ENCODE measurements at regions of chr1 and their contacts with region 1.

Region 1: DNA sequence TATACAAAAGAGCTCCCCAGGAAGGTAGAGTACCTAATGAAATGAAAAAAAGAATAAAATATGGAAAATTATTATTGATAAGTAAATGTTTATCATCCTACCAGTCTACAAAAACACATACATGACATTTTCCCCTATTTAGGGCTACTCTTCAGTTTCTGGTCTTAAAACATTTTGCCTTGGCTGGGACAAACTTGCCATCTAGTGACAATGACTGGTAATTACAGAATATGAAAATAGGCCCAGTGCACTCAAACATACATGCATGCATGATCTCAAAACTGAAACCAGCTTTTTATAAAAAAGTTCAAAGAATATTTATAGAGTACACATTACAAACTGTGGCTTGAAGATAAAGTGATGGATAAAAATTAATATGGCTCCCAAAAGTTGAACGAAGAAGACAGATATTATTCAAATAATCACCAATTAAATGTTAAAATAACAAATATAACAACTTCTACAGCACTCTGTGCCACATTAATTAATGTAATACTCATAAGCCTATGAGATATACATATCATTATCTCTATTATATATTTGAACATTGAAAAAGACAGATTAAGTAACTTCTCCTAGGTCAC is 10.5 kb upstream of the RNPC3 start:
- H3K4me3 Mint-ChIP-seq: no peak overlapping the region
- H3K27ac Mint-ChIP-seq: no peak overlapping the region
- H3K4me1 Mint-ChIP-seq: peaks cover 4% of the 10 kb centered on the region
- H3K27me3 Mint-ChIP-seq: no peaks in the 10 kb centered on the region

Region 2: DNA sequence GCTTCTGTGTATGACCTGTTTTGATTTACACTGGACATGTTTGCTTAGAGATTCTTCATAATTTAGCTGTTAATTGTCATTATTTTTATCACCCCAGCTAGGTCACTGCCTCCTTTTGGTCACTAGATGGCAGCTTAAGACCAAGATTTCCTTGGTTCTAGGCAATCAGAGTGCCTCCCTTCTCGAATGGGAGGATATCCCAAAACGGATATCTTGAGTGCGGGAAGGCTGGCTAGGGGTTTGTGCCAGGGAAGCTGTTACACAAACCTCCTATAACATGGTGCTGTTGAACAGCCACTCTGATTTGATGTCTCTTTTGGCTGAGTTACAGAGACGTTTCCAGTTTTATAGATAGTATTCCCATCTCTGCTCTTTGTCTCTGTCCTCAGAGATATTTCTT is 1994.7 kb before region 1 on chr1:
- intact Hi-C with region 1: loop called (anchors 10 kb)
- H3K4me3 Mint-ChIP-seq: no peak overlapping the region
- H3K27ac Mint-ChIP-seq: no peak overlapping the region
- H3K4me1 Mint-ChIP-seq: no peaks in the 10 kb centered on the region
- H3K27me3 Mint-ChIP-seq: peaks cover 1% of the 10 kb centered on the region

Region 3: DNA sequence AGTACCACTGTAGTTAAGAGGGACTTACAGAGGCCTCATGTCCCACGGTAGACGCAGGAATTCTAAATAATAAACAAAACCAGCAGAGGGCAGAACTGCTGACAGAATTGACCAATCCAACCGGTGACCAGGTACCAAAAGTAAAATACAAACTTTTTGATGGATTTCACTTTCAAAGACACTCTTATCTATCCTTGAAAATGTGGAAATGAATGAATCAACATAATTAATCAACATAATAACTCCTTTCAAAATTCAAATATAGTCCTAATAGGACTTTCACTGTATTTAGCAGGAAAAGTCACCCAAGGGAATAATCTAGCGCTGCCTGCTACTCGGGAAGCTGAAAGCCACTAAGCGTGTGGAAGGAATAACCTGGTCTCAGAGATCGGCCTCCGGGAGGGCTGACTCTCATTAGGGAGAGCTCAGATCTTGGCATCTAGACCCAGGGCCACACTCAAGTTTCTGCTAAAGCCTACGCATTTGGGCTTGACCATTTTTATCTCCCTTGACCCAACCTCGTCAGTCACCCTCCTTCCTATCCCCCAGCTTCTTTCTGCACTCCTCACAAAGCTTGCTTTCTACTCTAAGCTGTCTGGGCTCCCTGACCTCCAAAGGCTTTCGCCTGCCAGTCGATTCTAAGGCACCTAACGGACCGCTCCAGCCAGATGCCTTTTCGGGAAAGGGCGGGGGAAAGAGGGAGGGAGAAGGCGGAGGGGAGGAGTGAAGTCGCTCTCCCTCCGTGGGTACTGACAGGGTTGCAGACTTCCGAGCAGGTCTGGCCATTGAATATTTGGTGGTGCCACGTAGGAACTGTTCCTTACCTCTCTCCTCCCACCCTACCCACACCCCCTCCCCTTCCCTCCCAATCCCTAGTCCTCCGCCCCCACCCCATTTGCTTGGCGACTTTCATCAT is 408.3 kb before region 1 on chr1:
- intact Hi-C with region 1: loop called (anchors 1 kb)
- H3K4me3 Mint-ChIP-seq: no peak overlapping the region
- H3K27ac Mint-ChIP-seq: no peak overlapping the region
- H3K4me1 Mint-ChIP-seq: peaks cover 5% of the 10 kb centered on the region
- H3K27me3 Mint-ChIP-seq: peaks cover 30% of the 10 kb centered on the region

Region 4: GRCh38 chr1:103496014-103496635 is 18.9 kb before region 1 on chr1:
- intact Hi-C with region 1: no loop called
- H3K4me3 Mint-ChIP-seq: no peak overlapping the region
- H3K27ac Mint-ChIP-seq: no peak overlapping the region
- H3K4me1 Mint-ChIP-seq: no peaks in the 10 kb centered on the region
- H3K27me3 Mint-ChIP-seq: no peaks in the 10 kb centered on the region

Region 5: DNA sequence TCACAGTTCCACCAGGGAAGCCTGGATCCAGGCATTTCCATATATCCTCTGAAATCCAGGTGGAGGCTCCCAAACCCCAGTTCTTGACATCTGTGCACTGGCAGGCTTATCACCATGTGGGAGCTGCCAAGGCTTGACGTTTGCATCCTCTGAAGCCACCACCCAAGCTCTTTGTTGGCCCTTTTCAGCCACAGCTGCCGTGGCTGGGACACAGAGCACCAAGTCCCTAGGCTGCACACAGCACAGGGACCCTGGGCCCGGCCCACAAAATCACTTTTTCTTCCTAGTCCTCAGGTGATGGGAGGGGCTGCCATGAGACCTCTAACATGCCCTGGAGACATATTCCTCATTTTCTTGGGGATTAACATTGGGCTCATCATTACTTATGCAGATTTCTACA is 32.8 kb after region 1 on chr1:
- intact Hi-C with region 1: no loop called
- H3K4me3 Mint-ChIP-seq: no peak overlapping the region
- H3K27ac Mint-ChIP-seq: no peak overlapping the region
- H3K4me1 Mint-ChIP-seq: no peaks in the 10 kb centered on the region
- H3K27me3 Mint-ChIP-seq: no peaks in the 10 kb centered on the region